ENCODE measurements at regions of chr19 and their contacts with region 1.

Region 1: GRCh38 chr19:34134190-34135053 is 37.9 kb upstream of the LSM14A start:
- DNase-seq: peak; percentile 79 to 92 (median 87)
- ATAC-seq: peak; percentile 99
- H3K4me3 ChIP-seq: peak overlapping the region; percentile 91
- H3K4me3 Mint-ChIP-seq: peak overlapping the region; percentile 94 to 97 (median 95)
- H3K27ac ChIP-seq: peak overlapping the region; percentile 91
- H3K27ac Mint-ChIP-seq: peak overlapping the region; percentile 90 to 96 (median 91)
- H3K4me1 ChIP-seq: peaks cover 0 to 7% of the 10 kb centered on the region in 2 donors
- H3K4me1 Mint-ChIP-seq: peaks cover 3 to 11% (median 8%) of the 10 kb centered on the region in 7 donors
- H3K27me3 ChIP-seq: no peaks in the 10 kb centered on the region
- H3K27me3 Mint-ChIP-seq: peaks cover 0 to 3% (median 0%) of the 10 kb centered on the region in 5 donors

Region 2: DNA sequence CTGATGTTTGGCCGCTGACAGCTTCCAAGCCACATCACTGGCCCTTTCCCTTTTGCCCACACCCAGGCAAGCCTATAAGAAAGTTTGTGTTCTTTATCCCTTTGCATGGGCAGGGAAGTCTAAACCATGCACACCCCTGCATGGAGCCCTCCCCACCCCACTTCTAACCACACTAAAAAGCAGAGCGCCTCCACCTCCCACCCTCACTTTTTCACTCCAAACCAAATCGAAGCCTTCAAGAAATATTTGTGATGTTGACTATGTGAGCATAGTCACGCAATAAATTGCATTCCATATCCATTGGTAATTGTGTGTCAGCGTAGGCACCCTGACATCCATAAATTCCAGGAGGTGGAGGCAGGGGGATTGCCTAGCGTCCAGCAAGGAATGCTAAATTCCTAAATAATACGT is 66.6 kb before region 1 on chr19:
- CTCF ChIA-PET with region 1: no interaction called
- POLR2A ChIA-PET with region 1: no interaction called
- intact Hi-C with region 1: no loop called
- DNase-seq: no peak
- ATAC-seq: no peak
- H3K4me3 ChIP-seq: no peak overlapping the region
- H3K4me3 Mint-ChIP-seq: no peak overlapping the region
- H3K27ac ChIP-seq: no peak overlapping the region
- H3K27ac Mint-ChIP-seq: peak overlapping the region in 1 of 9 donors; percentile 55
- H3K4me1 ChIP-seq: no peaks in the 10 kb centered on the region
- H3K4me1 Mint-ChIP-seq: peaks cover 0 to 5% (median 0%) of the 10 kb centered on the region in 7 donors
- H3K27me3 ChIP-seq: no peaks in the 10 kb centered on the region
- H3K27me3 Mint-ChIP-seq: peaks cover 15 to 42% (median 27%) of the 10 kb centered on the region in 5 donors

Region 3: GRCh38 chr19:34120846-34121639 is 13.4 kb before region 1 on chr19:
- CTCF ChIA-PET with region 1: interaction called, 3 read pairs
- POLR2A ChIA-PET with region 1: interaction called, 12 read pairs
- intact Hi-C with region 1: loop called (anchors 1 kb)
- DNase-seq: peak in 8 of 9 donors; percentile 38 to 57 (median 50)
- ATAC-seq: peak; percentile 76
- H3K4me3 ChIP-seq: no peak overlapping the region
- H3K4me3 Mint-ChIP-seq: no peak overlapping the region
- H3K27ac ChIP-seq: no peak overlapping the region
- H3K27ac Mint-ChIP-seq: peak overlapping the region in 3 of 9 donors; percentile 8 to 39 (median 9)
- H3K4me1 ChIP-seq: peaks cover 0 to 11% of the 10 kb centered on the region in 2 donors
- H3K4me1 Mint-ChIP-seq: peaks cover 2 to 33% (median 26%) of the 10 kb centered on the region in 7 donors
- H3K27me3 ChIP-seq: no peaks in the 10 kb centered on the region
- H3K27me3 Mint-ChIP-seq: peaks cover 0 to 13% (median 0%) of the 10 kb centered on the region in 5 donors

Region 4: GRCh38 chr19:34345947-34346351 is 211.5 kb after region 1 on chr19:
- CTCF ChIA-PET with region 1: no interaction called
- POLR2A ChIA-PET with region 1: no interaction called
- intact Hi-C with region 1: loop called in 1 of 2 experiments (anchors 5 kb)
- DNase-seq: peak; percentile 37 to 66 (median 57)
- ATAC-seq: peak; percentile 45
- H3K4me3 ChIP-seq: no peak overlapping the region
- H3K4me3 Mint-ChIP-seq: peak overlapping the region in 1 of 10 donors; percentile 45
- H3K27ac ChIP-seq: no peak overlapping the region
- H3K27ac Mint-ChIP-seq: peak overlapping the region in 7 of 9 donors; percentile 33 to 87 (median 75)
- H3K4me1 ChIP-seq: peaks cover 11 to 13% of the 10 kb centered on the region in 2 donors
- H3K4me1 Mint-ChIP-seq: peaks cover 16 to 34% (median 28%) of the 10 kb centered on the region in 7 donors
- H3K27me3 ChIP-seq: no peaks in the 10 kb centered on the region
- H3K27me3 Mint-ChIP-seq: no peaks in the 10 kb centered on the region

Measured in naive thymus-derived CD4-positive, alpha-beta T cell (primary cell).